Activated CD4-positive, alpha-beta T cell treated with anti-CD3 and anti-CD28 coated beads, Interleukin-2, amount 10 ng/mL, durations not matched to agents 7 days and 5 days (primary cell): ENCODE measurements at regions of chr2 and their contacts with region 1.

Region 1: GRCh38 chr2:54855434-54855833 is 132.0 kb downstream of the EML6 start:
- DNase-seq: no peak
- H3K4me3 Mint-ChIP-seq: no peak overlapping the region
- H3K27ac Mint-ChIP-seq: no peak overlapping the region
- H3K4me1 Mint-ChIP-seq: no peaks in the 10 kb centered on the region
- H3K27me3 Mint-ChIP-seq: no peaks in the 10 kb centered on the region

Region 2: DNA sequence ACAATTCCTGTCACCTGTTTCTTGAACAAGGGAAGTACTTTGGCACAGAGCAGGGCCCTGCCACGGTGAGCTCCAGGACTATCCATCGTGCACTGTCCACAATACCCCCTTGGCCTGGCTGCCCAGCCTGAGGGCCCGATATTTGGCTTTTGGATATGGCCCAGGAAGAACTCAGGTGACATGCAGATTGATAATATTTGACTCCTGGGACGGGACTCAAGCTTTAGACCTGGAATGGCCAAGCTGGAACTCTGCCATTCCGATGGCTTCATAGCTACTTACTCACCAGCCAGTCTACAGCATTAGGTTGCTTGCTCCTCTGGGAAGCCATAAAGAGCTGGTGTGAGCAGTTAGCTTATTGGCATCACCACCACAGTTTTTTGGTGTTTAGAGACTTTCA is 105.4 kb before region 1 on chr2:
- CTCF ChIA-PET with region 1: no interaction called
- POLR2A ChIA-PET with region 1: interaction called, 15 read pairs
- DNase-seq: no peak
- H3K4me3 Mint-ChIP-seq: no peak overlapping the region
- H3K27ac Mint-ChIP-seq: no peak overlapping the region
- H3K4me1 Mint-ChIP-seq: no peaks in the 10 kb centered on the region
- H3K27me3 Mint-ChIP-seq: no peaks in the 10 kb centered on the region